IMR-90 (cell line): ENCODE measurements at regions of chr7 and their contacts with region 1.

Region 1: DNA sequence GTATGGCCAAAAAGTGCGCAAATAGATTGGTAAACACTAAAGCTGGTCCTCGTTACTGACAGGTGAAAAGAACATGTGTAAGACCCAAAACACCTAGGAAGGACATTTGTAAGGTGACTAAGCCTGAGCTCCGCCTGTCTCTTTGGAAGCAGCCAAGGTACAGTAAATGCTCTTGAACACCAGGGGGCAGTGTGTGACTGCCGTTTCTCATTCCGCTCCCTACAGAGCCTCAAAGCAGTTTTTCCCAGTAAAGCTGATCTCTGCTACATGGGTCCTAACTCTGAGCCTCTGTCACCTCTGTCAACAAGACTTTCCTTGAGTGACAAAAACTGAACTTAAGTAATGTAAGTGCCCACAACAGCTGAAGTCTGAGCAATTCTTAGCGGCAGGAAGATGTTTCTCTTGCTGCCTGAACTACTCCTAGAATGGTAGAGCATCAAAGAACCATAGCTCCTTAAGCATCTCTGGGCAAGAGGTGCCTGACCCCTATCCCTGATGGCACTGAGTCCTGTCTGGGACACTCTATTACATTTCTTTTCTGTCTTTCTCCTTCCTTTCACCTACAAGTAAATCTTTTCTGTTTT is 238.0 kb upstream of the INHBA start:
- DNase-seq: peak; percentile 79
- ATAC-seq: peak; percentile 65
- H3K4me3 ChIP-seq: no peak overlapping the region
- H3K27ac ChIP-seq: no peak overlapping the region
- H3K4me1 ChIP-seq: peaks cover 13% of the 10 kb centered on the region
- H3K27me3 ChIP-seq: no peaks in the 10 kb centered on the region
- CTCF ChIP-seq: peak; percentile 87
- POLR2A ChIP-seq: no peak
- RAD21 ChIP-seq: peak; percentile 87

Region 2: GRCh38 chr7:41705109-41705901 is 235.5 kb before region 1 on chr7:
- CTCF ChIA-PET with region 1: no interaction called
- POLR2A ChIA-PET with region 1: interaction called, 10 read pairs
- dilution Hi-C with region 1: no loop called
- in situ Hi-C with region 1: no loop called
- intact Hi-C with region 1: no loop called
- DNase-seq: peak; percentile 93
- ATAC-seq: peak; percentile 80
- H3K4me3 ChIP-seq: peak overlapping the region; percentile 60
- H3K27ac ChIP-seq: peak overlapping the region; percentile 96
- H3K4me1 ChIP-seq: peaks cover 22% of the 10 kb centered on the region
- H3K27me3 ChIP-seq: no peaks in the 10 kb centered on the region
- CTCF ChIP-seq: peak; percentile 88
- POLR2A ChIP-seq: peak; percentile 54; the same call in 1 of the 2 replicates
- RAD21 ChIP-seq: peak; percentile 93

Region 3: DNA sequence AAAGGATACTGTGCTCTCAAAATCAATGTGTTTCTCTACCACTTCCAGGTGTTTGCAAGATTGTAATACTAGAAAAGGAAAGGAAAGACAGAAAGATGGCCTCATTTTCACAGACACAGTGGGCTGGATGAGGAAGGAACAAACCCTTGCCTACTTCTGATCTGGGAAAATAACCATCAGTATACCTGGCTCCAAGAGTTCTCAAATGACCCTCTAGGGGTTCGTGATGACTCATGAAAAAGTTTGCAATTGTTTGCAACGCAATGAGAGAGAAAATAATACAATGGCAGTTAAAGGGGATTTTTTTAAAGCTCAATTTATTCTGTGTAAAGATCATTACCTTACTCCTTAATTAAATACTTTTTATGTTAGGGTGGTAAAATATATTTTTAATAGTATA is 40.3 kb before region 1 on chr7:
- CTCF ChIA-PET with region 1: no interaction called
- POLR2A ChIA-PET with region 1: no interaction called
- dilution Hi-C with region 1: no loop called
- in situ Hi-C with region 1: no loop called
- intact Hi-C with region 1: no loop called
- DNase-seq: no peak
- ATAC-seq: no peak
- H3K4me3 ChIP-seq: no peak overlapping the region
- H3K27ac ChIP-seq: no peak overlapping the region
- H3K4me1 ChIP-seq: peaks cover 7% of the 10 kb centered on the region
- H3K27me3 ChIP-seq: no peaks in the 10 kb centered on the region
- CTCF ChIP-seq: no peak
- POLR2A ChIP-seq: no peak
- RAD21 ChIP-seq: no peak

Region 4: GRCh38 chr7:41977151-41977651 is 36.3 kb after region 1 on chr7:
- CTCF ChIA-PET with region 1: interaction called, 22 read pairs
- POLR2A ChIA-PET with region 1: no interaction called
- dilution Hi-C with region 1: no loop called
- in situ Hi-C with region 1: no loop called
- intact Hi-C with region 1: loop called (anchors 2 kb)
- DNase-seq: peak; percentile 75
- ATAC-seq: peak; percentile 76
- H3K4me3 ChIP-seq: no peak overlapping the region
- H3K27ac ChIP-seq: no peak overlapping the region
- H3K4me1 ChIP-seq: peaks cover 7% of the 10 kb centered on the region; the same call in 1 of the 2 replicates
- H3K27me3 ChIP-seq: no peaks in the 10 kb centered on the region
- CTCF ChIP-seq: peak; percentile 74
- POLR2A ChIP-seq: no peak
- RAD21 ChIP-seq: peak; percentile 72

Region 5: DNA sequence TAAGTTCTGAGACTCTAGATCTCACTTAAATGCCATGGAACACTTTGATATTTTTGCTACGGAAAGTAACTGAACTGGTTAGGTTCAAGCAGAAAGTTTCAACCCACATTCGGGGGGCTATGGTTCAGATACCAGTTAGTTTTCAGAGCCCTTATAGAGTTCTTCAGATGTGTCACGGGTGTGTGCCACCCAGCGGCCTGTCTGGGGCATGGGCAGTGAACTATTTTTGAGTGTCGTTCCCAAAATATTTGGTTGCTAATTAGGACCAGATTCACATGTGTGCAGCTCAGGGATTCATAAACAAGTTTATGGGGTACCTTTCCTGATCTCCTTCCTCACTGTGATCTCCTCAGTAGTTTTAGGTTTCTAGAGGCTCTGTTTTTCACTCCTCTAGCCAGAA is 699.1 kb after region 1 on chr7:
- CTCF ChIA-PET with region 1: no interaction called
- POLR2A ChIA-PET with region 1: no interaction called
- dilution Hi-C with region 1: no loop called
- in situ Hi-C with region 1: no loop called
- intact Hi-C with region 1: loop called (anchors 1 kb)
- DNase-seq: no peak
- ATAC-seq: no peak
- H3K4me3 ChIP-seq: no peak overlapping the region
- H3K27ac ChIP-seq: no peak overlapping the region
- H3K4me1 ChIP-seq: no peaks in the 10 kb centered on the region
- H3K27me3 ChIP-seq: no peaks in the 10 kb centered on the region
- CTCF ChIP-seq: 0 out of 2 replicates have a peak, but pooled peaks have one; percentile 5
- POLR2A ChIP-seq: no peak
- RAD21 ChIP-seq: no peak

Region 6: GRCh38 chr7:42831718-42832431 is 891.0 kb after region 1 on chr7:
- CTCF ChIA-PET with region 1: interaction called, 11 read pairs
- POLR2A ChIA-PET with region 1: no interaction called
- dilution Hi-C with region 1: no loop called
- in situ Hi-C with region 1: loop called (anchors 5 kb)
- intact Hi-C with region 1: loop called (anchors 1 kb)
- DNase-seq: peak; percentile 36
- ATAC-seq: peak; percentile 87
- H3K4me3 ChIP-seq: no peak overlapping the region
- H3K27ac ChIP-seq: no peak overlapping the region
- H3K4me1 ChIP-seq: peaks cover 8% of the 10 kb centered on the region; the same call in 1 of the 2 replicates
- H3K27me3 ChIP-seq: peaks cover 11% of the 10 kb centered on the region
- CTCF ChIP-seq: peak; percentile 58
- POLR2A ChIP-seq: no peak
- RAD21 ChIP-seq: peak; percentile 53

Region 7: GRCh38 chr7:42876182-42877068 is 935.6 kb after region 1 on chr7:
- CTCF ChIA-PET with region 1: interaction called, 12 read pairs
- POLR2A ChIA-PET with region 1: no interaction called
- dilution Hi-C with region 1: no loop called
- in situ Hi-C with region 1: loop called (anchors 10 kb)
- intact Hi-C with region 1: loop called (anchors 1 kb)
- DNase-seq: peak; percentile 51
- ATAC-seq: peak; percentile 93
- H3K4me3 ChIP-seq: no peak overlapping the region
- H3K27ac ChIP-seq: no peak overlapping the region
- H3K4me1 ChIP-seq: peaks cover 3% of the 10 kb centered on the region; the same call in 1 of the 2 replicates
- H3K27me3 ChIP-seq: peaks cover 9% of the 10 kb centered on the region; the same call in 1 of the 2 replicates
- CTCF ChIP-seq: peak; percentile 70
- POLR2A ChIP-seq: no peak
- RAD21 ChIP-seq: peak; percentile 58